ENCODE measurements at regions of chr6 and their contacts with region 1.

Region 1: DNA sequence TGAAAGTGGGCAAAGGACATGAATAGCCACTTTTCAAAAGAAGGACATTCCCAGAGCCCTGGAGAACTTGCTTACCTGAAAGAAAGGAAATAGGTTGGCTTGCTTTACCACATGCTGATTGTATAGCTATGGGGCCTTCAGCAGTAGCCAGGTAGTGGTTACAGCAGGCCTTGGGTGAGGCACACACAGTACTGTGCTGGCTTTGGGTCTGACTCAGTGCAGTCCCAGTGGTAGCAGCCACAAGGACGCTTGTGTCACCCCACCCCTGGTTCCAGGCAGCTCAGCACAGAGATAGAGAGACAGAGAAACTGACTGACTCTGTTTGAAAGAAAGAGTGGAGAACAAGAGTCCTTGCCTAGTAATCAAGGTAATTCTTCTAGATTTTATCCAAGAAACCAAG is 201.0 kb upstream of the EYS start:
- DNase-seq: no peak
- H3K4me3 ChIP-seq: no peak overlapping the region
- H3K27ac ChIP-seq: no peak overlapping the region
- H3K4me1 ChIP-seq: no peaks in the 10 kb centered on the region
- H3K27me3 ChIP-seq: no peaks in the 10 kb centered on the region
- CTCF ChIP-seq: no peak

Region 2: GRCh38 chr6:65964261-65964660 is 56.2 kb after region 1 on chr6:
- CTCF ChIA-PET with region 1: no interaction called
- POLR2A ChIA-PET with region 1: no interaction called
- intact Hi-C with region 1: loop called (anchors 10 kb)
- DNase-seq: no peak
- H3K4me3 ChIP-seq: no peak overlapping the region
- H3K27ac ChIP-seq: no peak overlapping the region
- H3K4me1 ChIP-seq: no peaks in the 10 kb centered on the region
- H3K27me3 ChIP-seq: no peaks in the 10 kb centered on the region
- CTCF ChIP-seq: no peak